B cell (primary cell): ENCODE measurements at regions of chr5 and their contacts with region 1.

Region 1: GRCh38 chr5:91219803-91220371 is 163.2 kb downstream of the ARRDC3 start:
- DNase-seq: peak; percentile 19
- ATAC-seq: no peak
- H3K4me3 ChIP-seq: no peak overlapping the region
- H3K4me3 Mint-ChIP-seq: no peak overlapping the region
- H3K27ac ChIP-seq: no peak overlapping the region
- H3K27ac Mint-ChIP-seq: no peak overlapping the region
- H3K4me1 ChIP-seq: no peaks in the 10 kb centered on the region
- H3K4me1 Mint-ChIP-seq: no peaks in the 10 kb centered on the region
- H3K27me3 ChIP-seq: no peaks in the 10 kb centered on the region
- H3K27me3 Mint-ChIP-seq: peaks cover 7% of the 10 kb centered on the region
- CTCF ChIP-seq: no peak

Region 2: GRCh38 chr5:91101600-91102379 is 118.1 kb before region 1 on chr5:
- CTCF ChIA-PET with region 1: interaction called, 5 read pairs
- POLR2A ChIA-PET with region 1: no interaction called
- intact Hi-C with region 1: loop called (anchors 5 kb)
- DNase-seq: peak; percentile 65
- ATAC-seq: peak; percentile 84
- H3K4me3 ChIP-seq: no peak overlapping the region
- H3K4me3 Mint-ChIP-seq: no peak overlapping the region
- H3K27ac ChIP-seq: no peak overlapping the region
- H3K27ac Mint-ChIP-seq: no peak overlapping the region
- H3K4me1 ChIP-seq: no peaks in the 10 kb centered on the region
- H3K4me1 Mint-ChIP-seq: no peaks in the 10 kb centered on the region
- H3K27me3 ChIP-seq: no peaks in the 10 kb centered on the region
- H3K27me3 Mint-ChIP-seq: peaks cover 4% of the 10 kb centered on the region
- CTCF ChIP-seq: peak; percentile 67

Region 3: DNA sequence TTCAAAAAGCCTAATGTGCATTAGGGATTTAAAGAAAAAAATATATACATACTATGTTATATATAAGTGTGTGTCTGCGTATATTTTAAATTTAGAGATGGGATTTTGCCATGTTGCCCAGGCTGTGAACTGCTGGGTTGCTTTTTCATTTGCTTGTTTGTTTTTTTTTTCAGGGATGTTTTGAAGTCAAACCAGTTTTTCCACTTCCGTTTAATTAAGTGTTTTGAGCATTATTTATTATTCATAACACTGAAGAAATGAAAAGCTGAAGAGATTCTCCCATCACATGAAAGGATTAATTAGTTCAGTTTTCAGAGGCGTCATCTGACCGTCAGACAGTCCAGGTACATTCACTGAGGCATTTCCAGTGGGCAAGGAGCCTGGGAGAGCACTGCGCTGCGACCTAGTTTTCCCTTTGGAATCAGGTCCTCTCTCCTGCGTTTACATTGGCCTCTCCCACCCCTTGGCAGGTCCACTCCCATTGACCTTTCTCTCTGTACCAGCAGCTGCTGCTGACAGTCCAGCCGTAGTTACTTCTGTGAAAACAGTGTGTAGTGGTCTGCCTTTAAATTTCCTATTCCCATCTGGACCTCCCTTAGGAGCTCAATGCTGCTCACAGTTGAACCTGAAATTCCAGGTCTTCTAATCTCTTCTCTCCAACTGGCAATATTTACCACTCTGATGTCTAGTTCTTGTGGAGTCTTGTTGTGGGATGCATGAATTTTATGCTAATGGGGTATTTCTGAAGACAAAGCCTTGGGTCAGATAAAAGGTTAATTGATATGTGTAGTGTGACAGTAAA is 137.3 kb after region 1 on chr5:
- CTCF ChIA-PET with region 1: no interaction called
- POLR2A ChIA-PET with region 1: no interaction called
- intact Hi-C with region 1: no loop called
- DNase-seq: no peak
- ATAC-seq: no peak
- H3K4me3 ChIP-seq: no peak overlapping the region
- H3K4me3 Mint-ChIP-seq: no peak overlapping the region
- H3K27ac ChIP-seq: no peak overlapping the region
- H3K27ac Mint-ChIP-seq: peak overlapping the region; percentile 32
- H3K4me1 ChIP-seq: peaks cover 35 to 36% of the 10 kb centered on the region in 2 donors
- H3K4me1 Mint-ChIP-seq: peaks cover 39% of the 10 kb centered on the region
- H3K27me3 ChIP-seq: no peaks in the 10 kb centered on the region
- H3K27me3 Mint-ChIP-seq: no peaks in the 10 kb centered on the region
- CTCF ChIP-seq: no peak

Region 4: GRCh38 chr5:91403438-91403837 is 183.6 kb after region 1 on chr5:
- CTCF ChIA-PET with region 1: no interaction called
- POLR2A ChIA-PET with region 1: no interaction called
- intact Hi-C with region 1: no loop called
- DNase-seq: no peak
- ATAC-seq: no peak
- H3K4me3 ChIP-seq: no peak overlapping the region
- H3K4me3 Mint-ChIP-seq: no peak overlapping the region
- H3K27ac ChIP-seq: no peak overlapping the region
- H3K27ac Mint-ChIP-seq: no peak overlapping the region
- H3K4me1 ChIP-seq: no peaks in the 10 kb centered on the region
- H3K4me1 Mint-ChIP-seq: no peaks in the 10 kb centered on the region
- H3K27me3 ChIP-seq: no peaks in the 10 kb centered on the region
- H3K27me3 Mint-ChIP-seq: no peaks in the 10 kb centered on the region
- CTCF ChIP-seq: no peak